Activated CD4-positive, alpha-beta memory T cell treated with anti-CD3 and anti-CD28 coated beads for 36 hours (primary cell): ENCODE measurements at regions of chr6 and their contacts with region 1.

Region 1: GRCh38 chr6:148720406-148720805 is 26.4 kb upstream of the UST start:
- DNase-seq: no peak
- H3K4me3 Mint-ChIP-seq: no peak overlapping the region
- H3K27ac Mint-ChIP-seq: no peak overlapping the region
- H3K4me1 Mint-ChIP-seq: no peaks in the 10 kb centered on the region
- H3K27me3 Mint-ChIP-seq: peaks cover 20% of the 10 kb centered on the region

Region 2: DNA sequence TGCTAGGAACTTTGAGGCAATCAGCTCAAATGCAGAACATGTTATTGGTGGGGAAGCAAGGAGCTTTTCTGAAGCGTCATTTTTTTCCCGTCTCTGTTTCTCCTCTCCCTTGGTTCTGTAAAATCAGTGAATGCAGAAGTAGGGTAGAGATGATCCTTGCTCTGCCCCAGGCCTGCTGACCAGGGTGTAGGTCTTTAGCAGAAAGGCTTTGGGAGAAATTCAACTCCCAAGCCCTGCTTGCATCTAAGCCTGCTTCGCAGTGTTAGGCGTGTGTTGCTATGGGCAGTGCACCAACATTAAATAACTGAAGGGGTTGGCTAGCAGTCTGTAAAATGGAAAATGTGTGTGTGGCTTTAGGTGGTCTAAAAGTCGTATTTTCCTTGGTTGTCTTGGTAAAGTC is 331.9 kb before region 1 on chr6:
- CTCF ChIA-PET with region 1: no interaction called
- POLR2A ChIA-PET with region 1: no interaction called
- intact Hi-C with region 1: loop called (anchors 5 kb)
- DNase-seq: no peak
- H3K4me3 Mint-ChIP-seq: no peak overlapping the region
- H3K27ac Mint-ChIP-seq: no peak overlapping the region
- H3K4me1 Mint-ChIP-seq: no peaks in the 10 kb centered on the region
- H3K27me3 Mint-ChIP-seq: peaks cover 3% of the 10 kb centered on the region